ENCODE measurements at regions of chrX and their contacts with region 1.

Region 1: DNA sequence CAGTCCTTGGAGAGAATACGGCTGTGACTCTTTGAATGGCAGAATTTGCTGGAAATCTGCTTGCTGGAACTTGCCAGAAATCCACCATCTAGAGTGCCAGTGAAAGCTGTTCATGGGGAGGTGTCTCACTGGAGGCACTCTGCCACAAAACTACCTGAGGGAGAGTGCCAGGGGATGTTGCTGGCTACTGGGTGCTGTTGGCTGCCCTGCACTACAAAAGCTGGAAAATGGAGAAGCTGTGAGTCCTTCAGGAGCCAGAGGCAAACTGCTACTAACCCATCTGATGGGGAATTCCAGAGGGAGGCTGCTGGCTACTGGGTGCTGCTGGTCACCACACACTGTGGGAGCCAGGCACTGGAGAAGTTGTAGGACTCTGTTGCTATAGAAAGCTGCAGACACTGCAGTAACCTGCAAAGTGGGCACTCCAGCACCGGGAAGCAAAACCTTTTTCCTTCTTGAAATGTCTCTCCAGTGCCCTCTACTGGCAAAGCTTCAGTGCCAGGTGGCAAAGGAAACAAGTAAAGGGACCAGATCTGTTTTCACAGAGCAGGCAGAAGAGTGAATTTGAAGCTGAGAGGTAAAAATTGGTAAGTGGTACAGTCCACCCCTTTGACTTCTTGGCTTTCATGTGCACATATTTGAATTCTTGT is 47.8 kb upstream of the HSD17B10 start:
- DNase-seq: peak; percentile 73 to 78
- ATAC-seq: peak; percentile 92 to 93
- H3K4me3 ChIP-seq: no peak overlapping the region
- H3K27ac ChIP-seq: no peak overlapping the region
- H3K4me1 ChIP-seq: peaks cover 10% of the 10 kb centered on the region
- CTCF ChIP-seq: peak; percentile 65
- EP300 ChIP-seq: no peak
- POLR2A ChIP-seq: no peak
- RAD21 ChIP-seq: peak; percentile 66 to 75

Region 2: GRCh38 chrX:53044995-53045394 is 436.9 kb before region 1 on chrX:
- CTCF ChIA-PET with region 1: no interaction called
- POLR2A ChIA-PET with region 1: no interaction called
- DNase-seq: no peak
- ATAC-seq: no peak
- H3K4me3 ChIP-seq: no peak overlapping the region
- H3K27ac ChIP-seq: no peak overlapping the region
- H3K4me1 ChIP-seq: no peaks in the 10 kb centered on the region
- CTCF ChIP-seq: no peak
- EP300 ChIP-seq: no peak
- POLR2A ChIP-seq: no peak
- RAD21 ChIP-seq: no peak

Region 3: GRCh38 chrX:53433651-53434639 is 48.0 kb before region 1 on chrX and contains the start of gene HSD17B10:
- CTCF ChIA-PET with region 1: interaction called, 13 read pairs
- POLR2A ChIA-PET with region 1: no interaction called
- DNase-seq: peak; percentile 84 to 85
- ATAC-seq: peak; percentile 96 to 99
- H3K4me3 ChIP-seq: peak within 1 kb of the TSS; percentile 95
- H3K27ac ChIP-seq: peak within 1 kb of the TSS; percentile 89 to 92
- H3K4me1 ChIP-seq: peaks cover 5% of the 10 kb centered on the region; the same call in 1 of the 3 replicates
- CTCF ChIP-seq: no peak
- EP300 ChIP-seq: no peak
- POLR2A ChIP-seq: peak; percentile 81
- RAD21 ChIP-seq: no peak
- polyA plus RNA-seq, gene HSD17B10: 139 and 155 TPM in 2 replicates

Region 4: DNA sequence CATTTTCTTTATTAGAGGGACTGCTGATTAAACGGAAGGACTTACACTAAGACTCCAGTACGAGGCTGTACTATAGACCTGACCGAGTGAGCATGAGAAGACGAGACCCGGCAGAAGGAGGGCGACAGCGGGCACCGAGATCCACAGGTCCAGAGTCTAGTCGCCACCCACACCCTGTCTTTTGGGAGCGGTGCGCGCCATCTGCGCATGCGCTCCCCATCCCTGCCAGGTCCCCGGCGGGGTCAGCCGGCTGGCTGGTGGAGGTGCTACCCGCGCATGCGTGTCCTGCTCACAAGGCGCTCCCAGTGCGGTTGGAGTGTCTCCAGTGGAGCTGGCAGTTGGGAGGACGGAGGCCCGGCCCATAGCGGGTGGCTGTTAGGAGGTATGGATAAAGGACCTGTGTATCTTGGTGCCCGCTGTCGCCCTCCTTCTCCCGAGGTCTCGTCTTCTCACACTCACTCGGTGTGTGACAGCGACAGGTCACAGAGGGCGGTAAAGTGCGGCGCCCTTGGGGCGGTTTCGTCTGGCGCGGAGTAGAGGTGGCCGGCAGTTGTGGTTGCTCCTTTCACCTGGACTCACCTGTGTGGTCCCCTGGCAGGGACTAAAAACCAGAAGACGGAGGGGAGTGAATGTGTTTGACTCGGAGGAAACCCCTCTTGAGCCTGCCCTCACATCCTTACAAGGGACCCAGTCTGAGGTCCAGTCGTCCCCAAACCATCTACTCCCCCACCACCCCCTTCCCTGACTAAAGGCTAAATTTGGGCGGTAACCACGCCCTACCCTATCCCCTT is 40.2 kb before region 1 on chrX:
- CTCF ChIA-PET with region 1: interaction called, 19 read pairs
- POLR2A ChIA-PET with region 1: no interaction called
- DNase-seq: peak; percentile 91
- ATAC-seq: peak; percentile 84 to 92
- H3K4me3 ChIP-seq: peak overlapping the region; percentile 46
- H3K27ac ChIP-seq: peak overlapping the region; percentile 90 to 95
- H3K4me1 ChIP-seq: peaks cover 11% of the 10 kb centered on the region
- CTCF ChIP-seq: no peak
- EP300 ChIP-seq: no peak
- POLR2A ChIP-seq: peak; percentile 73
- RAD21 ChIP-seq: no peak

Region 5: GRCh38 chrX:53458082-53458481 is 23.9 kb before region 1 on chrX:
- CTCF ChIA-PET with region 1: interaction called, 142 read pairs
- POLR2A ChIA-PET with region 1: no interaction called
- DNase-seq: peak in 1 of 2 experiments; percentile 29
- ATAC-seq: peak; percentile 55 to 59; a peak in 3 of 6 replicates
- H3K4me3 ChIP-seq: no peak overlapping the region
- H3K27ac ChIP-seq: no peak overlapping the region
- H3K4me1 ChIP-seq: peaks cover 25% of the 10 kb centered on the region
- CTCF ChIP-seq: peak; percentile 43
- EP300 ChIP-seq: no peak
- POLR2A ChIP-seq: no peak
- RAD21 ChIP-seq: peak; percentile 36 to 47; a peak in 4 of 5 replicates

Region 6: GRCh38 chrX:53471346-53471745 is 10.6 kb before region 1 on chrX:
- CTCF ChIA-PET with region 1: interaction called, 142 read pairs
- POLR2A ChIA-PET with region 1: no interaction called
- DNase-seq: no peak
- ATAC-seq: no peak
- H3K4me3 ChIP-seq: no peak overlapping the region
- H3K27ac ChIP-seq: no peak overlapping the region
- H3K4me1 ChIP-seq: no peaks in the 10 kb centered on the region
- CTCF ChIP-seq: no peak
- EP300 ChIP-seq: no peak
- POLR2A ChIP-seq: no peak
- RAD21 ChIP-seq: no peak

Region 7: DNA sequence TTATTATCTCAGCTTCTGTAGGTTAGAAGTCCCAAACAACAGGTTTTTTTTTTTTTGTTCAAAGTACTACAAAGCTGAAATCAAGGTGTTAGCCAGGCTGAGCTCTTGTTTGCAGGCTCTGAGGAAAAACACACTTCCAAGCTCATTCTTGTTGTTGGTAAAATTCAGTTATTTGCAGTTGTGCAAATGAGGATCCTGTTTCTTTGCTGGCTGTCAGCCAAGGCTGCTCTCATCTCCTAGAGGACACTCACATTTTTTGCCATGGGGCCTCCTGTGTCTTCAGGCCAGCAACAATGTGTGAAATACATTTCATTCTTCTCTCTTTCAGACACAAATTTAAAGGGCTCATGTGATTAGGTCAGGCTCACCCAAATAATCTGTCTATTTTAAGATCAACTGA is 12.5 kb after region 1 on chrX:
- CTCF ChIA-PET with region 1: interaction called, 24 read pairs
- POLR2A ChIA-PET with region 1: no interaction called
- DNase-seq: no peak
- ATAC-seq: no peak
- H3K4me3 ChIP-seq: no peak overlapping the region
- H3K27ac ChIP-seq: no peak overlapping the region
- H3K4me1 ChIP-seq: no peaks in the 10 kb centered on the region
- CTCF ChIP-seq: no peak
- EP300 ChIP-seq: no peak
- POLR2A ChIP-seq: no peak
- RAD21 ChIP-seq: no peak

Measured in A549 (cell line).